Uterus (tissue), 4 donors: ENCODE measurements at regions of chr3 and their contacts with region 1.

Region 1: DNA sequence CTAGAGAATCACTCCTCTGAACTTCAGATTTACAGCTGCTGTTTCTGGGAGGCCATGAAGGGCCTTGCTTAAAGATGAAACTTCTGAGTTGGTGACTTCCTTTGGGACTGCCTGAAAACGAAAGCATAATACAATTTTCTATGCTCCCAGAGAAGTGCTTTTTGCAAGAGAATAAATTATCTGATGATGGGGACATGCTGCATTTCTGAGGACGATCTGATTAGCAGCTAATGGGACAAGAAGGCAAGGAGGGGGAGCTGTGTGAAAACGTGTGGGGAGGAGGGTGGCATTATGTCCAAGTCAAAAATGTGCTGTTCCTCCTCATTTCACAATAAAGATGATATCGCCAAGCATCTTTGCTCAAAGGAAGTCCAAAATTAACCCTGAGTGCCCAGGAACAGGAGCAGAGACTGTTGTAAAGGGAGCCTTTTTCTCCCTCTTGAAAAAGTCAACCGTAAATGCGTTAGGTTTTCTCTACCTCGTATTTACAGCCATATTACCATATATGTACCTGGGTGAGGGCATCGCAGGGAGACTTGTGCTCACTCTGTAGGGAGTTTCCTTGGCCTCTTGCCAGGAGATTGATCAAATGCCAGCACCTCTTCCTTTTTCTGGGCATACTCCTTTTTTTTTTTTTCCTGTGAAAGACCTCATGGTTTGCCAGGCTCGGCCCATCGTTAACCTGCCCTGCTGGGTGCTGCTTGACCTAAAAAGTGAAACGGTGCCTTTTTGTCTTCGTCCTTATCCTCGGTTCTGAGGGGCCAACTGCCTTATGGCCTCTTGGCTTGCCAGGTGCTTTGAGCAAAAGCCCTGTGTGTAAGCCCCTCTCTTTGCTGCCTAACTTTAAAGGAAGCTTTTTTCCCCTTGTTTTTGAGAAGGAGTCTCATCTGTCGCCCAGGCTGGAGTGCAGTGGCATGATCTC is 11.5 kb downstream of the ITPR1 start:
- DNase-seq: peak; percentile 42 to 59
- H3K4me3 ChIP-seq: peak overlapping the region; percentile 5 to 17
- H3K27ac ChIP-seq: peak overlapping the region; percentile 73 to 91
- H3K4me1 ChIP-seq: peaks cover 14 to 25% of the 10 kb centered on the region in 2 donors
- H3K27me3 ChIP-seq: no peaks in the 10 kb centered on the region
- CTCF ChIP-seq: no peak
- POLR2A ChIP-seq: no peak

Region 2: DNA sequence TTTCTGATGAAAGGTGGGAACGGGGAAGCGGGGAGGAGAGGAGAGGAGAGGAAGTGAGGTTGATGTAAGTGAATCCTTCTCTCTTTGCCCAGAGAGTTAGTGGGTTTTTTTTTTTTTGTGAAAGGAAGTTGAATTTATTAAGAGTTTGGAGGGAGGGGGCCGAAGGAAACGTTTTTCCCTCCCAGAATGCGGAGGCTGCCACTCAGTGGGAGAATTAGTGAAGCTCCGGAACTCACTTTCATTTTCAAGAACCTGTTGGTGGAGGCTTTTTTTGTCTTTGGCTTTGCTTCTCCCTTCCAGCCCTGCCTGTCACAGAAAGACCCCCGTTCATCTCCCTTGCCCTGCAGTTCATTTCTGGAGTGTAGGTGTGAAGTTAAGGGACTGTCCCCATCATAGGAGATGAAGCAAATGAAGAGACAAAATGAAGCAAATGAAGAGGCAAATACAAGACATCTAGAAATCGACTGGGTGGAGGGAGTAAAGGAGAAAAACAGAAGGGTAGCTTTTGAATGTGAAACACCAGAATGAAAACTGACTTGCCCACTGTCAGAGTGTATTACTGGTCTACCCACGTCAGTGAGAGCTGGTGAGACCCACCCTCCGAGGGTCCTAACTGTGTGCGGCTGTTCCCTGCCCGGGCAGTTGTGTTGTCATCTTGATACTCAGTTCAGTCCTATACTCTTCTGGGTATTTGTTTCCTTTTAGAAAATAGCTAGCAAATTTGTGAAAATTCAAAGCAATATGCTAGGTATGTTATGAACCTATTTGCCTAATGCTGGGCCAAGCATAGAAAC is 80.1 kb after region 1 on chr3:
- intact Hi-C with region 1: loop called (anchors 10 kb)
- DNase-seq: peak; percentile 50 to 62
- H3K4me3 ChIP-seq: peak overlapping the region; percentile 15 to 24
- H3K27ac ChIP-seq: peak overlapping the region; percentile 84 to 95
- H3K4me1 ChIP-seq: peaks cover 7 to 32% of the 10 kb centered on the region in 2 donors
- H3K27me3 ChIP-seq: no peaks in the 10 kb centered on the region
- CTCF ChIP-seq: peak in 2 of 4 experiments; percentile 23 to 36
- POLR2A ChIP-seq: no peak